Common myeloid progenitor, CD34-positive (primary cell): ENCODE measurements at regions of chr5 and their contacts with region 1.

Region 1: DNA sequence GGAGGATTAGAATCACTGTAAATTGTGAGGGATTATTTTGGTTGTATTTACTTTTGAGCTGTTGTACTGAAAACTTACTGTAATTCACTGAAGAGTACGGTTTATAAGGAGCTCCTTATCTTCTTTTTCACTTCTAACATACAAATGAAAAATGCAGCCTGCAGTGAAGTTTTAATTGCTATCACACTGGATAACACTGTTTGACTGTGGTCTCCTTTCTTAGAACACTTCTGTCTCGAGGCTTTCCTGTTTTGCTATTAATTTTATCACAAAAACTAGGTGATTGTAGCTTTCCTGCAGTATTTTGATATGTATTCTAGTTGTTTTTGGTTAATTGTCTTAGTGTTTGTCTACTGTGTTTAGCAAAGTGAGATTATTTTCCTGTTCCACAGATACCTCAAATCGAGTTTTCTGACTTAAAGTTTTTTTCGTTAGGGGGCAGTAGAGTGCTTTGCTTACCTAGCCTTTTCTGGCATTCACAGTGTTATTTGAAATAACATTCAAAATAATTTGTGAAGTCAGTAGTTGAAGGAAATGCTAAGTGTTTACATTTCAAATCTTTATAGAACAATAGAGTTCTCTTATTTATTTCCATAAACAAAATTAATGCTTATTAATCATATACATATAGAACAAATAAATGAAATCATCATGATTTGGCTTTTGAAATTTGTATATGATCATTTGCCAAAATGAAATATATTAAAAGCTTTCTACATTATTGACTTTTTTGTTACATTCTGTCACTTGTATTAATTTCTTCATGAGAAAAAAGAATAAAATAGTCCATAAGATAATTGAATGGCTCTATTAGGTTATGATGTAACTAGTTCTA is 52.9 kb downstream of the COMMD10 start:
- DNase-seq: peak; percentile 57 to 75 (median 72)
- H3K4me3 ChIP-seq: no peak overlapping the region
- H3K27ac ChIP-seq: no peak overlapping the region
- H3K4me1 ChIP-seq: peaks cover 0 to 5% (median 0%) of the 10 kb centered on the region in 4 experiments
- H3K27me3 ChIP-seq: no peaks in the 10 kb centered on the region

Region 2: DNA sequence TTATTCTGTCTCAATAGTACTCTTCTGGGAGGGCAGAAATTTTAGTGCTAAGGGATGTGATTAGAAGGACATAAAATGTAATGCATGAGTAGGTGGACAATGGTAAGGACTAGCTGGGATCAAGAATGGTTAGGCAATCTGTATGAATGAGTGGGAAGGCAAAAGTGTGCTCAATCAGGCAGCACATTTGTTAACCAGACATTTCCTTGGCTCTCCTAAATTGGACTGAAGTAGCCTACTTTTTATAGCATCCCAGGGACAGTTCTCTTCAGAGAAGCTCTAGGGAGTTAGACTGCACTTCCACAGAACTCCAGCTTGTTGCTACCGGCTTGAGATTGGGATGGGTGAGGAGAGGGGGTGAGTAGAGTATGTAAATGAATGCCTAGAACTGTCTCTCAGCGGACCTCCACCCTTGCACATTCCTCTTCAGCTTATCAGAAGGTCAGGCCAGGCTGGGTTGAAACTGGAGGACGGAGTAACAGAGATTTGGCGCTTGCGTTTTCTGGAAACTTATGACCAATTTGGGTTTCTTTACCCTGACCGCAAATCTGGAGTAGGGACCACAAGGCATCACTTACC is 124.5 kb before region 1 on chr5:
- CTCF ChIA-PET with region 1: no interaction called
- POLR2A ChIA-PET with region 1: no interaction called
- DNase-seq: no peak
- H3K4me3 ChIP-seq: no peak overlapping the region
- H3K27ac ChIP-seq: no peak overlapping the region
- H3K4me1 ChIP-seq: no peaks in the 10 kb centered on the region
- H3K27me3 ChIP-seq: no peaks in the 10 kb centered on the region

Region 3: DNA sequence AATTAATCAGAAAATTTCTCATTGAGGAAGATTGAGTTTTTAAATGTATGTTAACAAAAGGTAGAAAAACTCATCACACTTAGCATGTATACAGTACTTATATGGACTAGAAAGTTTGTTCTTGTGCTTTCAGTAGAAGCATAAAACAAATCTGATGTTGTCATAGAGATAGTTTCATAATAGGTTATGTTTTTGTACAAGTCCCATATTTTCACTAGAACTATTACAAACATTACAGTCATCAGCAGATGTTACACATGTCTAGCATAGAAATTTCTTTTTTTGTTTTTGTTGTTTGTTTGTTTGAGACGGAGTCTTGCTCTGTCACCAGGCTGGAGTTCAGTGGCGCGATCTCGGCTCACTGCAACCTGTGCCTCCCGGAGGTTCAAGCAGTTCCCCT is 78.5 kb after region 1 on chr5:
- CTCF ChIA-PET with region 1: no interaction called
- POLR2A ChIA-PET with region 1: no interaction called
- DNase-seq: no peak
- H3K4me3 ChIP-seq: no peak overlapping the region
- H3K27ac ChIP-seq: no peak overlapping the region
- H3K4me1 ChIP-seq: no peaks in the 10 kb centered on the region
- H3K27me3 ChIP-seq: no peaks in the 10 kb centered on the region

Region 4: GRCh38 chr5:116497631-116498030 is 359.9 kb after region 1 on chr5:
- CTCF ChIA-PET with region 1: interaction called, 36 read pairs
- POLR2A ChIA-PET with region 1: no interaction called
- DNase-seq: peak in 2 of 3 donors; percentile 41 to 57
- H3K4me3 ChIP-seq: no peak overlapping the region
- H3K27ac ChIP-seq: no peak overlapping the region
- H3K4me1 ChIP-seq: peaks cover 2 to 8% (median 3%) of the 10 kb centered on the region in 4 experiments
- H3K27me3 ChIP-seq: peaks cover 0 to 24% (median 9%) of the 10 kb centered on the region in 5 experiments